ENCODE measurements at regions of chr7 and their contacts with region 1.

Region 1: GRCh38 chr7:120987683-120988590 is 574 bp upstream of the CPED1 start:
- DNase-seq: peak; percentile 92
- H3K4me3 ChIP-seq: peak overlapping the region; percentile 43 to 62
- H3K27ac ChIP-seq: peak overlapping the region; percentile 69 to 90
- H3K4me1 ChIP-seq: no peaks in the 10 kb centered on the region
- H3K27me3 ChIP-seq: no peaks in the 10 kb centered on the region
- CTCF ChIP-seq: peak; percentile 82 to 87 (median 85)
- POLR2A ChIP-seq: no peak

Region 2: DNA sequence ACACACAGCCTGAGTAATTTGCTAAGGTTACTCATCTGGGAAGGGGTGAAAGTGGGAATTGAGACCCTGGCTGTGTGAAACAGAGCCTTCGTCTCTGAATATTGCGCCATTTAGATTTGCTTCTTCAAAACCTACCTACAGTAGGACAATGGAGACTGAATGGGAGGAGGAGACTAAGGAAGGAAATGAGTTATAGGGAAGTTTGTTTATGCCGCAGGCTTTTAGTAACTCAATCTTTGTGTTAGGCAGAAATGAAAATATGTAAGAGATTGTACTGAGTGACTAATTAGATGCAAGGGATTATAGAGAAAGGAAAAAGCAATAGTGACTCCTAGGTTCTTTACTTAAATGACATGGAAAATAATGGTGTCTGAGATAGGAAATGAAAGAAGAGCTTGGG is 634.8 kb before region 1 on chr7:
- intact Hi-C with region 1: no loop called
- DNase-seq: no peak
- H3K4me3 ChIP-seq: no peak overlapping the region
- H3K27ac ChIP-seq: no peak overlapping the region
- H3K4me1 ChIP-seq: no peaks in the 10 kb centered on the region
- H3K27me3 ChIP-seq: no peaks in the 10 kb centered on the region
- CTCF ChIP-seq: no peak
- POLR2A ChIP-seq: no peak

Region 3: DNA sequence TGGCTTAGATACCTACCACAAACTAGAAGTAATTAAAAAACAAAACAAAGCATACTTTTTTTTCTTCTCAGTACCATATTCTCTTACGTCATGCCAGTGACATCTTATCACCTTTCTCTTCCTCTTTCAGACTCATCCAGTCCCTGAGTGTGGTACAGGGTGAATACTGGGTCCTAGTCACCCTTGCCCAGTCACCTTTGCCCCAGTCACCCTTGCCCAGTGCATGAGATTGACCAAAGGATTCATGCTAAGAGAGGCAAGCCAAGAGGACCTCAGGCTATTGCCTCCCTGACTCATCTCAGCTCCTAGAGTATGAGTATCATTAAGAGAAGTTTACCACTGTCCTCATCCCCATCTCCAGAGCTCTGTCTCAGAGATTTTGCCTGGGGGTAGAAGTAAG is 120.0 kb before region 1 on chr7:
- intact Hi-C with region 1: no loop called
- DNase-seq: no peak
- H3K4me3 ChIP-seq: no peak overlapping the region
- H3K27ac ChIP-seq: no peak overlapping the region
- H3K4me1 ChIP-seq: no peaks in the 10 kb centered on the region
- H3K27me3 ChIP-seq: no peaks in the 10 kb centered on the region
- CTCF ChIP-seq: no peak
- POLR2A ChIP-seq: no peak

Region 4: GRCh38 chr7:120927454-120928103 is 60.4 kb before region 1 on chr7:
- intact Hi-C with region 1: no loop called
- DNase-seq: no peak
- H3K4me3 ChIP-seq: no peak overlapping the region
- H3K27ac ChIP-seq: no peak overlapping the region
- H3K4me1 ChIP-seq: no peaks in the 10 kb centered on the region
- H3K27me3 ChIP-seq: no peaks in the 10 kb centered on the region
- CTCF ChIP-seq: no peak
- POLR2A ChIP-seq: no peak

Region 5: GRCh38 chr7:121081327-121081936 is 93.5 kb after region 1 on chr7:
- intact Hi-C with region 1: loop called (anchors 5 kb)
- DNase-seq: no peak
- H3K4me3 ChIP-seq: no peak overlapping the region
- H3K27ac ChIP-seq: no peak overlapping the region
- H3K4me1 ChIP-seq: no peaks in the 10 kb centered on the region
- H3K27me3 ChIP-seq: no peaks in the 10 kb centered on the region
- CTCF ChIP-seq: peak; percentile 50 to 69 (median 58)
- POLR2A ChIP-seq: no peak